Dendritic cell treated with granulocyte-macrophage colony-stimulating factor and Interleukin-4, amounts not matched to agents 40 ng/mL and 50 ng/mL, for 4 days (primary cell): ENCODE measurements at regions of chr9 and their contacts with region 1.

Region 1: DNA sequence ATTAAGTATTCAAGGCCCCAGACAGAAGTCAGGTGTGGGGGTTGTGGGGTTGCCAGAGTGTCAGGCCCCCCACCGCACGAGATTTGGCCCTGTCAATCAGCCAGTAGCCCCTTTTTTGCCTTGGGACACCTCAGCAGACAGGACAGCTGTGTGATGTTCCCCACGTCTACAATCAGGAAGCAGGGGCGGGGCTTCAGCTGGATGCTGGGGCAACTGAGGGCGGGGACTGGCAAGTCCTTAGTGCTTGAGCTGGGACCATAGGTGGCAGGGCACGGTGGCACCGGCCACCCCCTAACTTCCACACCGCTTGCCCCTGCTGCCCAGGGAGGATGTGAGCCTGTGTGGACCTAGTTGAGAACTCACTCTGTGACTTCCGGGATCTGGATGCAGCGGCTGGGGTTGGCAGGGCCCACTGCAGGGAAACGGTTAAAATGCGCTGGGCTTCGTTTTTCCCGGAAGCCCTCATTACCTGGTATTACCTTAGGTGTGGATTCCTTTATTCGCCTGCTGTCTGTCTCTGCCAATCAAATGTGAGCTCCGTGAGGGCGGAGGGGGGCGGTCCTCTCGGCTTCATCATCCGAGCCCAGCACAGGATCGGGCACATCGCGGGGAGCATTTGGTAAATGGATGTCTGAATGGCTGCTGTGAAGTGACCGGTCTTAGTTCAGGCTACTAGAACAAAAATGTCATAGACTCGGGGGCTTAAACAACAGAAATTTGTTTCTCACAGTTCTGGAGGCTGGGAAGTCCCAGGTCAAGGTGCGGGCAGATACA is 7.5 kb upstream of the GTF3C5 start:
- H3K4me3 Mint-ChIP-seq: no peak overlapping the region
- H3K27ac Mint-ChIP-seq: no peak overlapping the region
- H3K4me1 Mint-ChIP-seq: peaks cover 12% of the 10 kb centered on the region
- H3K27me3 Mint-ChIP-seq: peaks cover 5% of the 10 kb centered on the region

Region 2: DNA sequence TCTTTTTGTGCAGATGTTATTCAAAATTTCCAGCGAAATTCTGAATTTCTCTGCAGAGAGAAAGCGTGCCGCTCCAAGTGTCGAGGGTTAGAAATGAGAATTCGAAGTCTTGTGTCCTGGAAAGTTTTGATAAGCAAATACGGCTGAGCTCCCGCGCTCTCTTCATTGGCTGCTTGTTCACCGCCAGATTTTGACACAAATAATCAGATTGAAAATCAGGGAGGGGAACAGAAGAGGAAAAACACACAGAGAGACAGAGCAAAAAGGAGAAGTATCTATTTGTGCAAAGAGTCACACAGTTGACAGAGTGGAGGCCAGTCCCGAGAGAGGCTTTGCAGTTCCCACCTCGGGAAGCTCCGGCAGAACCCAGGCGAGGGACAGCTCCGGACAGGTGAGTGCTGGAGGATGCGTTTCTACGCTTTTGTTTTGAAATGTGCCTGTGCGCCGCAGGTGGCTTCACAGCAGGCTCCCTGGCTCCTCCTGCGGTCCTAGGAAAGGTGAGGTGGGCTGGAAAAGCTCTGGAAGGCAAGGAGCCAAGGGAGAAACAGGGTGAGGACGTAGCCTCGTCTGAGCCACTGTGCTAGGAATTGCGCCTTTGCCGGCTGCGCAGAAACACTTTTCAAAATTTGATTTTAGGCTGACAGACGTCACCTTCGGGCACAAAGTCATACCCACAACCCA is 44.7 kb before region 1 on chr9 and contains the start of gene GFI1B:
- intact Hi-C with region 1: loop called (anchors 5 kb)
- H3K4me3 Mint-ChIP-seq: peak within 1 kb of the TSS; percentile 71
- H3K27ac Mint-ChIP-seq: no peak within 1 kb of the TSS
- H3K4me1 Mint-ChIP-seq: peaks cover 48% of the 10 kb centered on the region
- H3K27me3 Mint-ChIP-seq: peaks cover 73% of the 10 kb centered on the region

Region 3: GRCh38 chr9:133160742-133161546 is 137.6 kb after region 1 on chr9:
- intact Hi-C with region 1: no loop called
- H3K4me3 Mint-ChIP-seq: peak overlapping the region; percentile 13
- H3K27ac Mint-ChIP-seq: no peak overlapping the region
- H3K4me1 Mint-ChIP-seq: peaks cover 71% of the 10 kb centered on the region
- H3K27me3 Mint-ChIP-seq: peaks cover 9% of the 10 kb centered on the region